Breast epithelium (tissue), 4 donors: ENCODE measurements at regions of chr7 and their contacts with region 1.

Region 1: DNA sequence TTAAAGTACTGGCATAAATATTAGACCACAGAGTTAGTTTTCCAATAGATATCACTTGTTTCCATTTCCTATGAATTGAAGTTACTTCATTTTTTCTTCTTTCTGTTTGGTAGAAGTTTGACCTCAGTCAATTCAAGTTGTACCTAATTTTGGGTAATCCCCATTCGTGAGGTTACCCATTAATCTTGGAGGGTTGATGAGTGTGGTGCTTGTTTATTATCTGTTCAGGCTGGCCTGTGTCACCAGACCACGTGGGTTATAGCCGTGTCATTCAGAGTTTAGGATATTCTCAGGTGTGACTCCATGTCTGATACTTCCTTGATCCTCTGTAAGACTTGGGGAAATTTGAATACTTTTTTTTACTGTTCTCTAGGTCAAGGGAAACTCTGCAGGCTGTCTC is 133.9 kb upstream of the TPK1 start:
- DNase-seq: no peak
- H3K4me3 ChIP-seq: no peak overlapping the region
- H3K27ac ChIP-seq: no peak overlapping the region
- H3K4me1 ChIP-seq: no peaks in the 10 kb centered on the region
- H3K27me3 ChIP-seq: peaks cover 0 to 3% of the 10 kb centered on the region in 2 donors
- CTCF ChIP-seq: no peak
- POLR2A ChIP-seq: no peak

Region 2: GRCh38 chr7:143992670-143993069 is 977.1 kb before region 1 on chr7:
- intact Hi-C with region 1: no loop called
- DNase-seq: no peak
- H3K4me3 ChIP-seq: no peak overlapping the region
- H3K27ac ChIP-seq: no peak overlapping the region
- H3K4me1 ChIP-seq: no peaks in the 10 kb centered on the region
- H3K27me3 ChIP-seq: no peaks in the 10 kb centered on the region
- CTCF ChIP-seq: no peak
- POLR2A ChIP-seq: no peak

Region 3: DNA sequence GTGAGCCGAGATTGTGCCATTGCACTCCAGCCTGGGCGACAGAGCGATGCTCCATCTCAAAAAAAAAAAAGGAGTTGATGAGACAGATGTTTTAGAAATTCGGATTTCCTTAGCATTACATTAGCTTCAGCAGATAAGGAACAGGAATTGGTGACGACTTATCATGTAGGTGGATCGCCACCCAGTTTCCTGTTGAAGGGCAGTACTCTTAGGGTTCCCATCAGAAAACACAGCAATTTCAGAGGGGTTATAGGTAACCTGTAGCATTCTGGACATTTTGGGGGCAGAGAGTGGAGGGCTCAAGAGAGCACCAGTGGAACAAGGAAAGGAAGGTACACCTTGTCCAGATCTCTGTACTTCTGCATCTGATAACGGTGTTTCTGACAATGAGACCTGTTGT is 419.9 kb before region 1 on chr7:
- intact Hi-C with region 1: loop called (anchors 5 kb)
- DNase-seq: no peak
- H3K4me3 ChIP-seq: no peak overlapping the region
- H3K27ac ChIP-seq: no peak overlapping the region
- H3K4me1 ChIP-seq: no peaks in the 10 kb centered on the region
- H3K27me3 ChIP-seq: no peaks in the 10 kb centered on the region
- CTCF ChIP-seq: no peak
- POLR2A ChIP-seq: no peak

Region 4: GRCh38 chr7:144957998-144958397 is 11.8 kb before region 1 on chr7:
- intact Hi-C with region 1: loop called (anchors 1 kb)
- DNase-seq: no peak
- H3K4me3 ChIP-seq: no peak overlapping the region
- H3K27ac ChIP-seq: no peak overlapping the region
- H3K4me1 ChIP-seq: no peaks in the 10 kb centered on the region
- H3K27me3 ChIP-seq: no peaks in the 10 kb centered on the region
- CTCF ChIP-seq: no peak
- POLR2A ChIP-seq: no peak